ENCODE measurements at regions of chr7 and their contacts with region 1.

Region 1: GRCh38 chr7:78924581-78924980 is 528.9 kb downstream of the MAGI2 start:
- DNase-seq: peak; percentile 43
- ATAC-seq: no peak
- H3K4me3 ChIP-seq: no peak overlapping the region
- H3K27ac ChIP-seq: no peak overlapping the region
- H3K4me1 ChIP-seq: no peaks in the 10 kb centered on the region
- H3K27me3 ChIP-seq: no peaks in the 10 kb centered on the region
- CTCF ChIP-seq: peak; percentile 45
- POLR2A ChIP-seq: no peak
- RAD21 ChIP-seq: peak; percentile 59

Region 2: GRCh38 chr7:78587443-78588044 is 337.0 kb before region 1 on chr7:
- CTCF ChIA-PET with region 1: no interaction called
- POLR2A ChIA-PET with region 1: no interaction called
- dilution Hi-C with region 1: no loop called
- in situ Hi-C with region 1: no loop called
- intact Hi-C with region 1: loop called (anchors 5 kb)
- DNase-seq: peak; percentile 51
- ATAC-seq: peak; percentile 51; the same call in 1 of the 2 replicates
- H3K4me3 ChIP-seq: no peak overlapping the region
- H3K27ac ChIP-seq: no peak overlapping the region
- H3K4me1 ChIP-seq: no peaks in the 10 kb centered on the region
- H3K27me3 ChIP-seq: no peaks in the 10 kb centered on the region
- CTCF ChIP-seq: peak; percentile 62
- POLR2A ChIP-seq: no peak
- RAD21 ChIP-seq: peak; percentile 78

Region 3: GRCh38 chr7:78673272-78673671 is 251.3 kb before region 1 on chr7:
- CTCF ChIA-PET with region 1: no interaction called
- POLR2A ChIA-PET with region 1: no interaction called
- dilution Hi-C with region 1: no loop called
- in situ Hi-C with region 1: no loop called
- intact Hi-C with region 1: no loop called
- DNase-seq: no peak
- ATAC-seq: no peak
- H3K4me3 ChIP-seq: no peak overlapping the region
- H3K27ac ChIP-seq: no peak overlapping the region
- H3K4me1 ChIP-seq: peaks cover 4% of the 10 kb centered on the region; the same call in 1 of the 2 replicates
- H3K27me3 ChIP-seq: no peaks in the 10 kb centered on the region
- CTCF ChIP-seq: no peak
- POLR2A ChIP-seq: no peak
- RAD21 ChIP-seq: no peak

Region 4: GRCh38 chr7:79050603-79051002 is 126.0 kb after region 1 on chr7:
- CTCF ChIA-PET with region 1: no interaction called
- POLR2A ChIA-PET with region 1: no interaction called
- dilution Hi-C with region 1: no loop called
- in situ Hi-C with region 1: no loop called
- intact Hi-C with region 1: no loop called
- DNase-seq: peak; percentile 73
- ATAC-seq: no peak
- H3K4me3 ChIP-seq: no peak overlapping the region
- H3K27ac ChIP-seq: no peak overlapping the region
- H3K4me1 ChIP-seq: no peaks in the 10 kb centered on the region
- H3K27me3 ChIP-seq: no peaks in the 10 kb centered on the region
- CTCF ChIP-seq: no peak
- POLR2A ChIP-seq: no peak
- RAD21 ChIP-seq: no peak

Region 5: GRCh38 chr7:79176859-79177477 is 252.4 kb after region 1 on chr7:
- CTCF ChIA-PET with region 1: no interaction called
- POLR2A ChIA-PET with region 1: no interaction called
- dilution Hi-C with region 1: no loop called
- in situ Hi-C with region 1: no loop called
- intact Hi-C with region 1: loop called (anchors 10 kb)
- DNase-seq: peak; percentile 68
- ATAC-seq: peak; percentile 80
- H3K4me3 ChIP-seq: no peak overlapping the region
- H3K27ac ChIP-seq: no peak overlapping the region
- H3K4me1 ChIP-seq: no peaks in the 10 kb centered on the region; the same call in 1 of the 2 replicates
- H3K27me3 ChIP-seq: no peaks in the 10 kb centered on the region
- CTCF ChIP-seq: peak; percentile 70
- POLR2A ChIP-seq: no peak
- RAD21 ChIP-seq: peak; percentile 81

Region 6: GRCh38 chr7:79410345-79410744 is 485.8 kb after region 1 on chr7:
- CTCF ChIA-PET with region 1: no interaction called
- POLR2A ChIA-PET with region 1: no interaction called
- dilution Hi-C with region 1: no loop called
- in situ Hi-C with region 1: no loop called
- intact Hi-C with region 1: no loop called
- DNase-seq: peak; percentile 27
- ATAC-seq: peak; percentile 24; the same call in 1 of the 2 replicates
- H3K4me3 ChIP-seq: no peak overlapping the region
- H3K27ac ChIP-seq: no peak overlapping the region
- H3K4me1 ChIP-seq: peaks cover 2% of the 10 kb centered on the region; the same call in 1 of the 2 replicates
- H3K27me3 ChIP-seq: no peaks in the 10 kb centered on the region
- CTCF ChIP-seq: no peak
- POLR2A ChIP-seq: no peak
- RAD21 ChIP-seq: no peak